H1 (cell line): ENCODE measurements at regions of chr6 and their contacts with region 1.

Region 1: GRCh38 chr6:13908955-13909381 is 15.8 kb upstream of the RNF182 start:
- DNase-seq: no peak
- H3K4me3 ChIP-seq: no peak overlapping the region
- H3K27ac ChIP-seq: no peak overlapping the region
- H3K4me1 ChIP-seq: peaks cover 0 to 6% (median 0%) of the 10 kb centered on the region in 4 experiments; a peak in 1 of 7 replicates
- H3K27me3 ChIP-seq: no peaks in the 10 kb centered on the region
- CTCF ChIP-seq: peak in 2 of 3 experiments; percentile 72 to 87; a peak in 3 of 4 replicates
- EP300 ChIP-seq: no peak
- POLR2A ChIP-seq: no peak
- RAD21 ChIP-seq: peak; percentile 98

Region 2: GRCh38 chr6:13814176-13814937 is 94.6 kb before region 1 on chr6 and contains the start of gene MCUR1:
- CTCF ChIA-PET with region 1: no interaction called
- POLR2A ChIA-PET with region 1: no interaction called
- DNase-seq: peak; percentile 50 to 83
- H3K4me3 ChIP-seq: peak within 1 kb of the TSS; percentile 67 to 89 (median 70)
- H3K27ac ChIP-seq: peak within 1 kb of the TSS; percentile 91
- H3K4me1 ChIP-seq: peaks cover 0 to 7% (median 4%) of the 10 kb centered on the region in 4 experiments; a peak in 4 of 7 replicates
- H3K27me3 ChIP-seq: no peaks in the 10 kb centered on the region
- CTCF ChIP-seq: peak in 2 of 3 experiments; percentile 18 to 30; a peak in 3 of 4 replicates
- EP300 ChIP-seq: no peak; a peak in 1 of 3 replicates
- POLR2A ChIP-seq: peak in 1 of 2 experiments; percentile 59; a peak in 2 of 3 replicates
- RAD21 ChIP-seq: 0 out of 4 replicates have a peak, but pooled peaks of 1 of the 2 experiments have one; percentile 6
- total RNA-seq, gene MCUR1: 35.9 and 37.3 TPM in 2 replicates

Region 3: GRCh38 chr6:13924146-13924948 is 15.4 kb after region 1 on chr6:
- CTCF ChIA-PET with region 1: interaction called, 23 read pairs
- POLR2A ChIA-PET with region 1: interaction called, 15 read pairs
- DNase-seq: peak in 1 of 2 experiments; percentile 87
- H3K4me3 ChIP-seq: peak overlapping the region; percentile 57 to 90 (median 76)
- H3K27ac ChIP-seq: 0 out of 2 replicates have a peak overlapping the region, but pooled peaks have one; percentile 6
- H3K4me1 ChIP-seq: peaks cover 0 to 4% (median 3%) of the 10 kb centered on the region in 4 experiments; a peak in 3 of 7 replicates
- H3K27me3 ChIP-seq: no peaks in the 10 kb centered on the region; a peak in 3 of 7 replicates
- CTCF ChIP-seq: no peak
- EP300 ChIP-seq: no peak
- POLR2A ChIP-seq: peak in 1 of 2 experiments; percentile 14; a peak in 1 of 3 replicates
- RAD21 ChIP-seq: no peak

Region 4: DNA sequence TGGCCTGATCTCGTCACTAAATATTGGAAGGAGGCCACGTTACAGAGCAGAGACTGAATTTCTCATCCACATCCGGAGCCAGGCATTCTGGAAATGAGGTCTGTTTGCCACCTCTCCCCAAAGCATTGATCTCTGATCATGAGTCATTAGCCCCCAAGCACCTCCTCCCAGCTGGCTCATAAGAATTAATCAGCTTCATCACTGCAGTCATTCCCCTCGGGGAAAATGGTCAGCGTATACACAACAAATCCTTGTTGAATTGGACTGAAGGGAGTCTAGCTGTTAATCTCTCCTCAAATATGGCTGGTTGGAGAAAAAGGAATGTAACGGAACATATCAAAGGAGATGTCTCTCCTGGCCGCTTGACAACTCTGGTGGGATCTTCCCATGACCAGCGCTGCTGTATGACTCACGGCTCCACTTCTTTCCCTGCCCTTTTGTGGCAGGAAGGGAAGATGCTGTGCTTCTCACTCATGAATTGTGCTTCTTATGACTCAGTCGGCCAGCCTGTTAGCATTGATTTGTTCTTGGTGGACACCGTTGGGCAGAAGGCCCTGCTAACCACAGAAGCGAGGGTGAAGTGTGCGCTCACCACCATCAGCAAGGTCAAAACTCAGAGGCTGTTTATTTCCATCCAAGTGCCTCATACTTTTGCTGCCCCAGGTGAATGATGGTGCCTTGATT is 92.5 kb after region 1 on chr6:
- CTCF ChIA-PET with region 1: interaction called, 25 read pairs
- POLR2A ChIA-PET with region 1: no interaction called
- DNase-seq: no peak
- H3K4me3 ChIP-seq: no peak overlapping the region
- H3K27ac ChIP-seq: no peak overlapping the region
- H3K4me1 ChIP-seq: peaks cover 0 to 6% (median 2%) of the 10 kb centered on the region in 4 experiments; a peak in 2 of 7 replicates
- H3K27me3 ChIP-seq: no peaks in the 10 kb centered on the region; a peak in 1 of 7 replicates
- CTCF ChIP-seq: no peak
- EP300 ChIP-seq: no peak
- POLR2A ChIP-seq: no peak
- RAD21 ChIP-seq: no peak

Region 5: DNA sequence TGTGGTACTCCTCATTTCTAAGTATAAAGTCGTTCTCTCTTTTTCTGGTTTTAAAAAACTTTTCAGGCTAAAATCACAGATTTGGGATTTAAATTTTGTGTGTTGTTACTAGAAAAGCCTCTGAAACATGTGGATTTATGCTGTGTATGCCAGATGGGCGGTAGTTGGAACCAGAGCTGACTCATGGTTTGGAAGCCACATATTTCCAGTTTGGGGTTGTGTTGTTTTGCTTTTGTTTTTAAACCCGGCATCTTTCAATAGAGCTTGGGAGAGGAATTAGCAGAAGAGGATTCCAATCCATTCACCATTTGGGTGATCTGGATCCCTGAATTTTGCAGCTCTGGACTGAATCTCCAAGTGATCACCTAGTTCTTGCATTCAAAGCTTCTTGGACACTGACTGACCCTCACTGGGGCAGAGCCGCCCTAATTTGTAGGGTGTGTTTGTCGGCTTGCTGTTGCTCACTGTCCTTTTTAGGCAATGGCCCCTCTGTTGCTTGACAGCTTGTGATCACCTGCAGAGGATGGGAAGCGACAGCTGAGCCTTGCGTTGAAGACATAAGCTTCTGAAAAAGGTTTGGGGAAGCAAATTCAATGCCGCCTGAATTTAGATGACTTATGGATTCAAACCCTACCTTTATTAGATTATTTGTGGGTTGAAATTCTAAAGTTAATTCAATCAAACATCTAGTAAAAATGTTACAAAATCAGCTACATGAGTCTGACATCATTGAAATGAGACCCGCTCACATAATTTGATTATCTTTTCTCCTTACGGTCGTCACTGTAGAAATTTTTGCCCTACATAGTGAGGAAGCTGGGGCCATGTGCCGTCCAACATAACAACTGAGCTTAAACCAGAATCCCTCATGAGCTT is 128.7 kb after region 1 on chr6:
- CTCF ChIA-PET with region 1: interaction called, 89 read pairs
- POLR2A ChIA-PET with region 1: no interaction called
- DNase-seq: no peak
- H3K4me3 ChIP-seq: no peak overlapping the region
- H3K27ac ChIP-seq: no peak overlapping the region
- H3K4me1 ChIP-seq: peaks cover 2 to 11% (median 6%) of the 10 kb centered on the region in 4 experiments; a peak in 5 of 7 replicates
- H3K27me3 ChIP-seq: no peaks in the 10 kb centered on the region
- CTCF ChIP-seq: no peak
- EP300 ChIP-seq: no peak
- POLR2A ChIP-seq: no peak
- RAD21 ChIP-seq: no peak

Region 6: DNA sequence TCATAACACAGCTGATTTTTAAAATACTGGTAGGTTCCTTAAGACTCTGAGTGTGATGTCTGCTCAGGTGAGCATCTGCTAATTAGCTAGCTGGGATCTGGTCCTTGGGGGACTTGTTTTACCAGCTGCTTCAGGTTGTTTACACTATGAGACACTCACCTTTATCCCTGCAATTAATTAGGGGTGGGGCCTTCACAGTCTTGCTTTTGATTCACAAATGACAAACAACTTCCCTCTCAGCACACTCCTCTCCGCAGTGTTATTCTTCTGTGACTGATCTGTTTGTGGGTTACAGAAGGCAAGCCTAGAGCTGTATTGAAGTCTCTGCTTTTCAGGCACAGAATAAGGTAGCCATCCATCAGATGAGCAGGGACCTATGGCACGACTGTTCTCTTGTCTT is 146.6 kb after region 1 on chr6:
- CTCF ChIA-PET with region 1: interaction called, 37 read pairs
- POLR2A ChIA-PET with region 1: no interaction called
- DNase-seq: no peak
- H3K4me3 ChIP-seq: no peak overlapping the region
- H3K27ac ChIP-seq: no peak overlapping the region
- H3K4me1 ChIP-seq: peaks cover 0 to 3% (median 0%) of the 10 kb centered on the region in 4 experiments; a peak in 1 of 7 replicates
- H3K27me3 ChIP-seq: no peaks in the 10 kb centered on the region; a peak in 1 of 7 replicates
- CTCF ChIP-seq: no peak
- EP300 ChIP-seq: no peak
- POLR2A ChIP-seq: no peak
- RAD21 ChIP-seq: no peak